Adrenal gland (tissue), 19 donors: ENCODE measurements at regions of chr5 and their contacts with region 1.

Region 1: DNA sequence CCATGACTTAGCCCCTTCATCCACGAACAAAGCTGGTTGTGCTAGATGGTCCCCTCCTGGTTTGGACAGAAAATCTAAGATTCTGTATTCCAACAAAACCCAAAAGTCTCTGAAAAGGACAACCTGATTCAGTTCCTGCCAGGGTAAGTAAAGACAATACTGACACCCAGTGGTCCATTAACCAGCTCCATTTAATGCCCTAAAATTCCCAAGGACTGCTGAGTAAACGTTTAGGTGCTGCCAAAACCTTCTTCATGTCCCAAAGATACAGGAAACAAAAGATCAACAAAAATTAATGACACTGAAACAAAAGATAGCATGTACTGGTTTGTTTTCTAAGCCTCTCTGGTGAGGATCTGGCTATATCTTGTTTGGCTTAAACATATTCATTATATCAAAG is 25.3 kb upstream of the PPP1R2B start:
- DNase-seq: peak in 5 of 7 donors; percentile 9 to 23 (median 17)
- H3K4me3 ChIP-seq: no peak overlapping the region
- H3K27ac ChIP-seq: no peak overlapping the region
- H3K4me1 ChIP-seq: no peaks in the 10 kb centered on the region
- H3K27me3 ChIP-seq: no peaks in the 10 kb centered on the region
- CTCF ChIP-seq: peak; percentile 13 to 57 (median 50)
- POLR2A ChIP-seq: no peak

Region 2: DNA sequence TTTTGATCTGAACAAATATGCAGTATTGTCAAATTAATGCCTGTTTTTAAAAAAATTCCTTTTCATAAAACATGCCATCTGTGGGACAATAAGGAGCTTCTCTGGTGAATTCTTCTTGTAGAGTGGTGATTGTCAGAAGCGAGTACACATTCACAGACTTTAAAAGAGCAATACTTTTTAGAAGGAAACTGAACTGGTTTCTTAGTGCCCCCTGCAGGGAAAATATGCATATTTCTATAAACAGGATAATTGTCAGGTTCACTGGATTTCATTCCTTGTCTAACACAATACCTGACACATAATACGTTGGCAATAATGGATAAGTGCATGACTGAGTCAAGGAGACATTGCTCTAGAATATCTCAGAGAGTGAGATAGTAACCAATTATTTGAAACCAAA is 1677.6 kb before region 1 on chr5:
- intact Hi-C with region 1: loop called in 1 of 2 experiments (anchors 10 kb)
- DNase-seq: no peak
- H3K4me3 ChIP-seq: no peak overlapping the region
- H3K27ac ChIP-seq: no peak overlapping the region
- H3K4me1 ChIP-seq: no peaks in the 10 kb centered on the region
- H3K27me3 ChIP-seq: no peaks in the 10 kb centered on the region
- CTCF ChIP-seq: peak; percentile 19 to 46 (median 34)
- POLR2A ChIP-seq: no peak

Region 3: GRCh38 chr5:155943516-155944407 is 881.0 kb before region 1 on chr5:
- intact Hi-C with region 1: loop called (anchors 10 kb)
- DNase-seq: peak; percentile 41 to 76 (median 66)
- H3K4me3 ChIP-seq: no peak overlapping the region
- H3K27ac ChIP-seq: no peak overlapping the region
- H3K4me1 ChIP-seq: no peaks in the 10 kb centered on the region
- H3K27me3 ChIP-seq: no peaks in the 10 kb centered on the region
- CTCF ChIP-seq: peak; percentile 59 to 72 (median 66)
- POLR2A ChIP-seq: no peak